Panc1 (cell line): ENCODE measurements at regions of chr14 and their contacts with region 1.

Region 1: DNA sequence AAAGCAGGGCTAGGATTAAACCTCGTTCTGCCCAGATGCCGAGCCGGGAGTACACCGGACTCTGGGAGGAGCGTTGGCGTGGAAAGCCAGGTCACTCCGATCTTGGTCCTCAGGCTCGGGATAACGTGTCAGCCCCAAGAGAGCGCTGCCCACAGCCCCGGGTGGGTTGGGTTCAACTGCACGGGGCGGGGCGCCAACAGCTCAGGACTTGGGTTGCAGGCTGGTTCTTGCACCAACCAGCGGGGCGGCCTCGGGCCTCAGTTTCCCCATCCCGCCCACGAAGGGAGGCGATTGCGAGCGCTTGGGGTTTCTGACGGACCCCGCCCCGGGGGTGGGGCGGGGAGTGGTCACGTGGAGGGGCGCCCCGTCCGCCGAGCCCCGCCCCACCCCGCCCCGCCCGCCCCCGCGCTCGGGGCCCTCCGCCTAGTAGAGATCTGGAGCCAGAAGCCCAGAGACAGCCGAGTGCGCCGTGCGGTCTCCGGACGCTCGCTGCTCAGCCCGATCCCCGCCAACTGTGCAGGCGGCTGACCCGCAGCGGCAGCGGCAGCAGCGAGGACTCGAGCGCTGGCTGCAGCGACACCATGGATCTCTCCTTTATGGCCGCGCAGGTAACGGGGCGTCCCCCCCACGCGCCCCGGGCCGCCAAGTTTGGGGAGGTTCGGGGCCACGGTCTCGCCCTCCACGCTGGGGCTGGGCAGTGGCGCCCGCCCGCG is at the start of gene C14orf132:
- DNase-seq: no peak
- ATAC-seq: peak; percentile 90
- H3K4me3 ChIP-seq: peak within 1 kb of the TSS; percentile 58 to 60
- H3K27ac ChIP-seq: peak within 1 kb of the TSS; percentile 17; the same call in 1 of the 2 replicates
- H3K4me1 ChIP-seq: no peaks in the 10 kb centered on the region; the same call in 1 of the 2 replicates
- H3K27me3 ChIP-seq: peaks cover 9% of the 10 kb centered on the region
- CTCF ChIP-seq: no peak
- total RNA-seq, gene C14orf132: 23.0 TPM

Region 2: DNA sequence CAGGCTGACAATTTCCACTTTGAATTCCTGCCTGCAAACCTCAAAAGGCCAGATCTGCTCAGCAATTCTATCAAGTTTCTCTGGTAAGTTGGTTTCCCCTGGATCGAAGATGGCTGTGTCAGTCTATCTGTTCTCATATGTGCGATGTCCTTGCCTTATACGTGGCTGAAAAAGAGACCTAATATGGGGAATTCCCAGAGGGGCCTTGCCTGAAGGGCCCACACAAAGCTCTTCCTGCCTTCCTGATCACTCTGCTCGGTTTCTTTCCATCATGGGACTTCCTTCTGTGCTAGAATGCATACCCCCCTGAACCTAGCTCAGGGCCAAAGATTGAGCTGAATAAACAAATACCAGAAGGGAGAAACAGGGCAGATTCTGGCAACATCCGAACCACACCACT is 339.7 kb before region 1 on chr14:
- CTCF ChIA-PET with region 1: no interaction called
- POLR2A ChIA-PET with region 1: no interaction called
- in situ Hi-C with region 1: no loop called
- intact Hi-C with region 1: no loop called
- DNase-seq: no peak
- ATAC-seq: no peak
- H3K4me3 ChIP-seq: no peak overlapping the region
- H3K27ac ChIP-seq: no peak overlapping the region
- H3K4me1 ChIP-seq: no peaks in the 10 kb centered on the region
- H3K27me3 ChIP-seq: no peaks in the 10 kb centered on the region; the same call in 1 of the 2 replicates
- CTCF ChIP-seq: no peak

Region 3: GRCh38 chr14:96053600-96054381 is 14.7 kb after region 1 on chr14:
- CTCF ChIA-PET with region 1: no interaction called
- POLR2A ChIA-PET with region 1: no interaction called
- in situ Hi-C with region 1: no loop called
- intact Hi-C with region 1: no loop called
- DNase-seq: no peak
- ATAC-seq: 0 out of 2 replicates have a peak, but pooled peaks have one; percentile 31
- H3K4me3 ChIP-seq: no peak overlapping the region
- H3K27ac ChIP-seq: no peak overlapping the region
- H3K4me1 ChIP-seq: no peaks in the 10 kb centered on the region; the same call in 1 of the 2 replicates
- H3K27me3 ChIP-seq: no peaks in the 10 kb centered on the region
- CTCF ChIP-seq: no peak

Region 4: DNA sequence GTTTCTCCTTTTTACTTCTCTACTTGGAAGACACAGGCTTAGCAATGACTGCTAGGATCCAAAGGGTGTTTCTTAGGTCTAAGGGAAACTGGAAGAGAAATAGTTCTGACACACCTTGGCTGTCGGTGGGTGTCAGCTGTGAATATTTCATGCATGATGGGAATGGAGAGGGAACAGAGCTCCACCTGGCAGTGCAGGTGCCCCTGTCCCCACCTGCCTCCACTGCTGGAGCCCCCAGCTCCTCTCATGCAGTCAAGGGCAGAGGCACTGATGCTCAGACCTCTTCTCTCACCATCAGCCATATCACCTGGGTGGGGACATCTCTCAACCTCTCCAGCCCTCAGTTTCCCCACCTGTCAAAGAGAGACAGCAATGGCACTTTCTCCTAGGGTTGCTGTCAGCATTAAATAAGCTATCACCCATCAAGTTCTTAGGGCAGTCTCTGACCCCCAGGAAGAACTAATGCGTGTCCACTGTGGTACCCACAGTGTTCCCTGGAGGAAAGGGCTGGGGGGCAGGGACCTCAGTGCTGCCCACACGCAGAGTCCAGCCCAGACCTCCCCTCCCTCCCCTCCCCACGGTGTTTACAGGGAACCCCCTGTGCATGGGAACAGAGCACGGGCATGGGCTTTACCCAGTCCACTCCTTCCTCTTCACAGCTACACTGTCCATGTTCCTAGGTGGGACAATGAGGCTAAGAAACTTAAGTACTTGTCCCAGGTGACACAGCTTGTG is 69.2 kb after region 1 on chr14:
- CTCF ChIA-PET with region 1: no interaction called
- POLR2A ChIA-PET with region 1: interaction called, 10 read pairs
- in situ Hi-C with region 1: no loop called
- intact Hi-C with region 1: no loop called
- DNase-seq: no peak
- ATAC-seq: no peak
- H3K4me3 ChIP-seq: no peak overlapping the region
- H3K27ac ChIP-seq: no peak overlapping the region
- H3K4me1 ChIP-seq: no peaks in the 10 kb centered on the region
- H3K27me3 ChIP-seq: no peaks in the 10 kb centered on the region
- CTCF ChIP-seq: no peak